Posterior cingulate gyrus (tissue), 11 donors: ENCODE measurements at regions of chr22 and their contacts with region 1.

Region 1: DNA sequence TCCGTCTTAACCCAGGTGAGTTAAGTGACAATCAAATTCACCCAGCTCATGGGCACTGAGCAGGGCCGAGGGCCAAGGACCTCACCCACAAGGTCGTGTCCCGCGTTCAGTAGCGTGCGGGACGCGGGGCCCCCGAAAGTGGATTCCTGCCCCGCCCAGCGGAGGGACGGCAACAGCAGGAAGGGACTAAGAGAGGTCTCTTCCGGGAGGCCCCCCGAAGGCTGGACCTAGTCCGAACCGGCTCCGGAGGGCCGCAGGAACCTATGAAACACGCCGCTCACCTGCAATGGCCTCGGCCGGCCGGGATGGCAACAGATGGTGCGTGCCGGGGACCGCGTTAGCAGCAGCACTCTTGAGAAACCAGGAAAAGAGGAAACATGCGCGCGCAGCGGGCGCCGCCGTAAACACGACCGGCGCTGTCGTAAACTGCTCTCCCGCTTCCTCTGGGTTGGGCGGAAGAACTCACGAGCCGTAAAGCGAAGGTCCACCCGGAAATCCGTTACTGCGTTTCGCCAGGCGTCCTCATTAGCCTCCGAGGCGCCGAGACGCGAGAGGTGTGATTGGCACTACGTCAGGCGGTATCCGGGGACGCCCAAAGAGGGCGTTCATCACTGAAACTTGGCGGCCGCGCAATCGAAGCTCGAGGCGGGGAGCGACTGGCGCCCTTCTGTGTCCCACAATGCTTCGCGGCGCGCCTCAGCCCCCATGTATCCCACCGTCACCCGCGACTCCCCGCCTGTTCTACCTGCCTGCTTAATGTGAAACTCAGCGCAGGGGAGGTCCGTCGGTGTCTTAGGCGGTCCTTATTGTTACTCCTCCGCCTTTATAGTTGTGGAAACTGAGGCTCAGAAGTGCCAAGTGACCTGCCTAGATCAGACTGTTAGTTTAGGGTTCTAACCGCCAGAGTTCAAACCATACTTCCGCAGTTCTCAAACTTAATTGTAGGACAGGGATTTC is at the start of gene EIF3D:
- DNase-seq: peak; percentile 93 to 99 (median 96)

Region 2: DNA sequence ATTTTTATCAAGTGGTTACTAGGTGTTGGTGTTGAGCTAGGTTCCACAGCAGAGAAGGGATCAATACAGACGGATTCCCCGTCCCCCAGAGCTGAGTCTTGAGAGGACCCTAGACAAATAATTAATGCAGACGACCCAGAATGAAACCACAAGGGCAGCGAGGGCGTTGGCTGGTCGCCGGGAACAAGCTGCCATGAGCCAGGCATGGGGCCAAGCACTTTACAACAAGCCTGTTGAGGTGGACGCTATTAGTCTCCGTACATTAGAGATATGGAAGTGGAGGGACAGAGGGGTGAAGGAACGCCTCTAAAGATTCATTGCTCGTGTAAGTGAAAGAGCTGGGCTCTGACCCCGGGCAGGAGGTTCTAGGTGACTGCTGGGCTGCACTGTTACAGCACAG is 77.0 kb after region 1 on chr22:
- intact Hi-C with region 1: no loop called
- DNase-seq: peak in 1 of 10 donors; percentile 57

Region 3: GRCh38 chr22:36775964-36776669 is 247.0 kb after region 1 on chr22 and contains the start of gene IFT27:
- intact Hi-C with region 1: loop called (anchors 5 kb)
- DNase-seq: peak; percentile 96 to 100 (median 99)